Psoas muscle (tissue), 8 donors: ENCODE measurements at regions of chr1 and their contacts with region 1.

Region 1: DNA sequence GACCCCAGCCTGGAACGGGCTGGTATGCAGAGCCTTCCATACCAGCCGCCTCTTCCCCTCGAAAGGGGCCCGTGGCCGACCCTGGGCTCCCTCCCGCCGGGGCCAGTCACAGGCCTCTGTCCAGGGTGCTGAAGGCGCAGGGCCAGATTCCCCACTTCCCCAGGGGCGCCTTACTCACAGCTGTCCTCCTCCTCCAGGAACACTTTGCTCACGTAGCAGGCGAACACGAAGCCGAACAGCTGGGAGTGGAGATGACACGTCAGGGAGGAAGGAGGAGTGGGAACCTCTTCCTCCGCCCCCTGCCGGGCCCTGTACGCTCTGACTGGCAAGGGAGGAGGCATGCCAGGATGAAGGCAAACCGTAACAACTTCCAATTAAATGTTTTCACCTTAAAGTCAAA is 57.3 kb downstream of the NKAIN1 start:
- DNase-seq: peak; percentile 86 to 94
- ATAC-seq: peak; percentile 93 to 94 (median 93)
- H3K4me3 ChIP-seq: peak overlapping the region; percentile 55
- H3K27ac ChIP-seq: peak overlapping the region; percentile 52
- H3K4me1 ChIP-seq: peaks cover 12% of the 10 kb centered on the region
- H3K27me3 ChIP-seq: no peaks in the 10 kb centered on the region
- CTCF ChIP-seq: peak; percentile 48

Region 2: GRCh38 chr1:30627994-30628393 is 554.4 kb before region 1 on chr1:
- intact Hi-C with region 1: no loop called
- DNase-seq: no peak
- ATAC-seq: no peak
- H3K4me3 ChIP-seq: no peak overlapping the region
- H3K27ac ChIP-seq: no peak overlapping the region
- H3K4me1 ChIP-seq: no peaks in the 10 kb centered on the region
- H3K27me3 ChIP-seq: peaks cover 0 to 4% (median 0%) of the 10 kb centered on the region in 3 donors
- CTCF ChIP-seq: no peak

Region 3: GRCh38 chr1:31259746-31260145 is 77.4 kb after region 1 on chr1:
- intact Hi-C with region 1: loop called in 1 of 2 experiments (anchors 5 kb)
- DNase-seq: no peak
- ATAC-seq: peak in 1 of 4 donors; percentile 36
- H3K4me3 ChIP-seq: no peak overlapping the region
- H3K27ac ChIP-seq: peak overlapping the region; percentile 66
- H3K4me1 ChIP-seq: peaks cover 47% of the 10 kb centered on the region
- H3K27me3 ChIP-seq: no peaks in the 10 kb centered on the region
- CTCF ChIP-seq: no peak

Region 4: GRCh38 chr1:31335007-31335406 is 152.7 kb after region 1 on chr1:
- intact Hi-C with region 1: loop called (anchors 1 to 2 kb)
- DNase-seq: no peak
- ATAC-seq: peak in 3 of 4 donors; percentile 61 to 83 (median 69)
- H3K4me3 ChIP-seq: no peak overlapping the region
- H3K27ac ChIP-seq: no peak overlapping the region
- H3K4me1 ChIP-seq: no peaks in the 10 kb centered on the region
- H3K27me3 ChIP-seq: no peaks in the 10 kb centered on the region
- CTCF ChIP-seq: peak; percentile 61